ENCODE measurements at regions of chr1 and their contacts with region 1.

Region 1: GRCh38 chr1:209747580-209748262 is 8.1 kb upstream of the TRAF3IP3 start:
- DNase-seq: peak; percentile 88
- ATAC-seq: peak; percentile 98
- H3K4me3 ChIP-seq: peak overlapping the region in 4 of 5 experiments; percentile 37 to 56 (median 52)
- H3K4me3 Mint-ChIP-seq: peak overlapping the region; percentile 84
- H3K27ac ChIP-seq: peak overlapping the region; percentile 44 to 50
- H3K27ac Mint-ChIP-seq: peak overlapping the region; percentile 75
- H3K4me1 ChIP-seq: peaks cover 29 to 33% of the 10 kb centered on the region in 2 donors
- H3K4me1 Mint-ChIP-seq: peaks cover 35% of the 10 kb centered on the region
- H3K27me3 ChIP-seq: no peaks in the 10 kb centered on the region
- H3K27me3 Mint-ChIP-seq: no peaks in the 10 kb centered on the region
- CTCF ChIP-seq: peak; percentile 98

Region 2: DNA sequence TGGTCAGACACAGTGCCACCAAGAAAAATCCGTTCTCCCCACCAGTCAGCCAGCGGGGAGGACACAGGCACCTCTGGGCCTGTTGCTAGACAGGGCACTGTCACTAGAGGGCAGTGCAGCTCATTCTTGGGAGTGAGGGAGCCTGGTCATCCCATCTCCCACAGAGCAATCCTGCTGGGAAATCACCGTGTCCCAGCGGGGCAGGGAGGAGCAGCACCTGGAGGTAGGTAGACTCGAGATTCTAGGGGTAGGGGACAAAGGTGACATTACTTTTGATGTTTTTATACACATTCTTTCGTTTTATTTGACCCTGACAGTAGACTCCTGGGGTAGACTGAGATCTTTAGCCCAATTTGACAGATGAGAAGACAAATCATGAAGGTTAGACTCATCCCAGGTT is 170.9 kb before region 1 on chr1:
- CTCF ChIA-PET with region 1: interaction called, 5 read pairs
- POLR2A ChIA-PET with region 1: no interaction called
- intact Hi-C with region 1: loop called (anchors 1 kb)
- DNase-seq: peak; percentile 56
- ATAC-seq: peak; percentile 51
- H3K4me3 ChIP-seq: no peak overlapping the region
- H3K4me3 Mint-ChIP-seq: no peak overlapping the region
- H3K27ac ChIP-seq: no peak overlapping the region
- H3K27ac Mint-ChIP-seq: no peak overlapping the region
- H3K4me1 ChIP-seq: no peaks in the 10 kb centered on the region
- H3K4me1 Mint-ChIP-seq: no peaks in the 10 kb centered on the region
- H3K27me3 ChIP-seq: peaks cover 0 to 2% (median 0%) of the 10 kb centered on the region in 4 experiments
- H3K27me3 Mint-ChIP-seq: peaks cover 31% of the 10 kb centered on the region
- CTCF ChIP-seq: peak; percentile 84

Region 3: DNA sequence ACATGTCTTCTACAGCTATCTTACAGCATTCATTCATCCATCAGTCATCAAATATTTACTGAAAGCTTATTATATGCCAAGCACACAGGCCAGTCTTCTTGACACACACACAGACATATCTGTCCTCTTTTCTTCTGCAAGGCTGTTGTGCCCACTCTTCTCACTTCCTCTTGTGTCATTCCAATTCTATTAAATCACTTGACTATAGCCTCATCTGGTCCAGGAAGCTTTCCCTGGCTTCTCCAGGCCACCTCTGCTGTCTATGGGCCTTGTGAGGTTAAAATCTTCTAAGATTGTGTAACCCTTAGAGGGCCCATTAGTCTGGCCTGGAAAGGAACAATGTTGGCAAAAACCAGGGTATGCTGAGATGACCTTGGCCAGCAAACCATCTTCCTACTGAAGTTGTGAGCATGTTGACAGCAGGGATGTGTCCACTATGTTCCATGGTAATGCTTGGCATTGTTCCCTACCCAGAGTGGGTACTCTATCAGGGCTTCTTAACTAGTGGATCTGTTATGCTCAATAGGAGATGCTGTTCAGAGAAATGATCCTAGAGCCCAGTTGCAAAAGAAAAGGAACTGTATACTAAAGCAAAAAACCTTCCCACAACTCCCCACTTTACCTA is 13.4 kb after region 1 on chr1:
- CTCF ChIA-PET with region 1: interaction called, 48 read pairs
- POLR2A ChIA-PET with region 1: no interaction called
- intact Hi-C with region 1: loop called (anchors 1 kb)
- DNase-seq: no peak
- ATAC-seq: no peak
- H3K4me3 ChIP-seq: no peak overlapping the region
- H3K4me3 Mint-ChIP-seq: peak overlapping the region; percentile 12
- H3K27ac ChIP-seq: peak overlapping the region in 1 of 2 donors; percentile 76
- H3K27ac Mint-ChIP-seq: peak overlapping the region; percentile 66
- H3K4me1 ChIP-seq: peaks cover 43 to 56% of the 10 kb centered on the region in 2 donors
- H3K4me1 Mint-ChIP-seq: peaks cover 68% of the 10 kb centered on the region
- H3K27me3 ChIP-seq: no peaks in the 10 kb centered on the region
- H3K27me3 Mint-ChIP-seq: no peaks in the 10 kb centered on the region
- CTCF ChIP-seq: no peak

Region 4: GRCh38 chr1:209774592-209774991 is 26.9 kb after region 1 on chr1:
- CTCF ChIA-PET with region 1: interaction called, 48 read pairs
- POLR2A ChIA-PET with region 1: interaction called, 9 read pairs
- intact Hi-C with region 1: no loop called
- DNase-seq: peak; percentile 51
- ATAC-seq: peak; percentile 60
- H3K4me3 ChIP-seq: peak overlapping the region in 3 of 5 experiments; percentile 13 to 29 (median 16)
- H3K4me3 Mint-ChIP-seq: peak overlapping the region; percentile 81
- H3K27ac ChIP-seq: peak overlapping the region; percentile 42 to 77
- H3K27ac Mint-ChIP-seq: no peak overlapping the region
- H3K4me1 ChIP-seq: peaks cover 59 to 67% of the 10 kb centered on the region in 2 donors
- H3K4me1 Mint-ChIP-seq: peaks cover 3% of the 10 kb centered on the region
- H3K27me3 ChIP-seq: no peaks in the 10 kb centered on the region
- H3K27me3 Mint-ChIP-seq: no peaks in the 10 kb centered on the region
- CTCF ChIP-seq: no peak

Region 5: GRCh38 chr1:210328746-210329503 is 581.2 kb after region 1 on chr1 and contains the start of gene HHAT:
- CTCF ChIA-PET with region 1: no interaction called
- POLR2A ChIA-PET with region 1: no interaction called
- intact Hi-C with region 1: loop called (anchors 5 kb)
- DNase-seq: peak; percentile 75
- ATAC-seq: peak; percentile 70
- H3K4me3 ChIP-seq: peak within 1 kb of the TSS; percentile 52 to 89 (median 87)
- H3K4me3 Mint-ChIP-seq: peak within 1 kb of the TSS; percentile 94
- H3K27ac ChIP-seq: peak within 1 kb of the TSS; percentile 54 to 64
- H3K27ac Mint-ChIP-seq: peak within 1 kb of the TSS; percentile 90
- H3K4me1 ChIP-seq: peaks cover 16 to 25% of the 10 kb centered on the region in 2 donors
- H3K4me1 Mint-ChIP-seq: peaks cover 39% of the 10 kb centered on the region
- H3K27me3 ChIP-seq: peaks cover 0 to 2% (median 0%) of the 10 kb centered on the region in 4 experiments
- H3K27me3 Mint-ChIP-seq: peaks cover 12% of the 10 kb centered on the region
- CTCF ChIP-seq: no peak
- total RNA-seq, gene HHAT: 26.7 and 28.2 TPM in 2 replicates